ENCODE measurements at regions of chr10 and their contacts with region 1.

Region 1: DNA sequence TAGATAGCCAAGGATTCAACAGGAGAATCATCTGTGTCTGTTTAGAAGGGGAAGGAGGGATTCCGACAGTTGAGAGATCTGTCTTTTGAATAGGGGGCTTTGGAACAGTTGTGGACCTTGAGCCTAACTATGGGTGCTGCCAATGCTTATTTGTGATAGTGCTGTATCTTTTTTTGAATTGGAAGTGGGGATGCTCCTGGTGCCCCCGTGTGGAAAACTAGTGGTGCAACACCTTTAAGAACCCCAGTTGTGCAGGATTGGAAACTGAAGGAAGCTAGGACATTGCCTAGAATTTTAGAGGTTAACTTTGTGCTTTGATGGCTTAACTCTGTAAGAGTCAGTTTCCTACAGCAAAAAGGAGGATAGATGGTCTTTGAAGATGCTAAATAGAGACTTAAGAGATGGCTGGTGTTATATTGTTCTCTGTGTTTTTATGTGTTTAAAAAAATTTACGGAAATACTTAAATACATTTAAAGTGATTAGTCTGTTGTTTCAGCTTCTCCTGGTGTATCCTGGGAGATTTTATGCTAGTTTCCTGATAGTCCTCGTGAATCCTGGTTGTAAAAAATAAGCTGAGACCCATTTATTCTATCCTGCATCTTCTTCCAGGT is 69.3 kb downstream of the AP3M1 start:
- DNase-seq: no peak
- H3K4me3 ChIP-seq: no peak overlapping the region
- CTCF ChIP-seq: peak; percentile 71

Region 2: GRCh38 chr10:73857446-73857845 is 223.9 kb before region 1 on chr10:
- CTCF ChIA-PET with region 1: no interaction called
- POLR2A ChIA-PET with region 1: no interaction called
- DNase-seq: no peak
- H3K4me3 ChIP-seq: no peak overlapping the region
- CTCF ChIP-seq: no peak

Region 3: GRCh38 chr10:74051736-74052342 is 29.5 kb before region 1 on chr10:
- CTCF ChIA-PET with region 1: interaction called, 12 read pairs
- POLR2A ChIA-PET with region 1: no interaction called
- DNase-seq: no peak
- H3K4me3 ChIP-seq: no peak overlapping the region
- CTCF ChIP-seq: no peak

Region 4: DNA sequence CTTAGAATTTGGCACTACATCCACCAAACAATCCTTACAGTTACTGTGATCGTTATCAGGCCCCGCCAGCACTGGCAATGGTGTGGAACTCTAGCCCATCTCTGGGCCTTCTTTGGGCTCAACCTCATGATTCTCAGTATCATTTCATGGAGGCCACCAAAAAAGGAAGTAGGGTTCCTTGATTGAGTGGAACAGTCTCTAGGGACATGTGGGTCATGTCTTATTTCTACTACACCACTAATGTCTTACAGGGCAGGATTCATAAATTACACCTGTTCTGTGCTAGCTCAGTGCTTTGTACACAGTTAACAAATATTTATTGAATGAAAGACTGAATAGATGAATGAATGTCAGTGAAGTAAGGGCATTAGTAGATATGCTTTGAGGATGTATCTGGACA is 15.5 kb after region 1 on chr10:
- CTCF ChIA-PET with region 1: interaction called, 55 read pairs
- POLR2A ChIA-PET with region 1: no interaction called
- DNase-seq: no peak
- H3K4me3 ChIP-seq: no peak overlapping the region
- CTCF ChIP-seq: no peak

Region 5: DNA sequence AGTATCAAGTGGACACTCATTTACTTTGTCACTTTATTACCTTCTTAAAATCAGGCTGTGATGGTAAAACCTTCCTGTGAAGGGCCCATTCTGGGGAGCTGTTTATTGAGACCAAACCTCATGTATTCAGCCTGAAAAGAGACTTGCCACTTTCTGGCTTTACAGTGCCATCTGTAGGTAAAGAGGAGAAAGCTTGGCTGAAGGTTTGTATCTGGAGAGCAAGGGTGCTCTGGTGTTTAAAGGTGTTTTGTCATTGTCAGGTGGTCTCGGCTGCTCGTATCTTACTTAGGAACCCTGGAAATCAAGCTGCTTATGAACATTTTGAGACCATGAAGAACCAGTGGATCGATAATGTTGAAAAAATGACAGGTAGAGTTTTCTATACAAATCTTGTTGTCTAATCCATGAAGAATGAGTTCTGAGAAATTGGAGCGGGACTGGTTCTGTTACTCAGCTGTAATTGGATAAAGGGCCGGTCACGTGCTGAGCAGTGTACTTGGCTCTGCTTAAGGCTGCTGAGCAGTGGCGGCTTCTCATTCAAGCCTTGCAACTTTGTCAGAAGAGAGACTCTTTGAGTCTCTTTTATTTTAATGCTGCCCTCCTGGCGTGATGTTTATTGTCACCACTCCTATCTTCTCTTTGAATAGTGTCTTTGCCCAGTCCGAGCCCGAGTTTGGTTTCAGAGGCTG is 22.4 kb after region 1 on chr10:
- CTCF ChIA-PET with region 1: interaction called, 25 read pairs
- POLR2A ChIA-PET with region 1: no interaction called
- DNase-seq: no peak
- H3K4me3 ChIP-seq: no peak overlapping the region
- CTCF ChIP-seq: peak; percentile 29

Measured in AG04449 (cell line).